Ascending aorta (tissue), 2 donors: ENCODE measurements at regions of chr21 and their contacts with region 1.

Region 1: GRCh38 chr21:44801468-44802395 is at the start of gene UBE2G2:
- DNase-seq: peak in 1 of 2 donors; percentile 86
- H3K4me3 ChIP-seq: peak within 1 kb of the TSS; percentile 85 to 91
- H3K27ac ChIP-seq: peak within 1 kb of the TSS; percentile 66
- H3K4me1 ChIP-seq: peaks cover 7 to 14% of the 10 kb centered on the region in 2 donors
- H3K27me3 ChIP-seq: no peaks in the 10 kb centered on the region
- CTCF ChIP-seq: no peak
- total RNA-seq, gene UBE2G2: 58.1 TPM

Region 2: GRCh38 chr21:44817506-44817880 is 15.8 kb after region 1 on chr21:
- intact Hi-C with region 1: loop called (anchors 1 kb)
- DNase-seq: peak; percentile 51 to 93
- H3K4me3 ChIP-seq: peak overlapping the region; percentile 60 to 85
- H3K27ac ChIP-seq: peak overlapping the region; percentile 73 to 82
- H3K4me1 ChIP-seq: peaks cover 5 to 12% of the 10 kb centered on the region in 2 donors
- H3K27me3 ChIP-seq: no peaks in the 10 kb centered on the region
- CTCF ChIP-seq: no peak

Region 3: GRCh38 chr21:44932408-44933181 is 130.9 kb after region 1 on chr21:
- intact Hi-C with region 1: loop called (anchors 5 kb)
- DNase-seq: no peak
- H3K4me3 ChIP-seq: peak overlapping the region; percentile 47 to 66
- H3K27ac ChIP-seq: no peak overlapping the region
- H3K4me1 ChIP-seq: peaks cover 19 to 22% of the 10 kb centered on the region in 2 donors
- H3K27me3 ChIP-seq: peaks cover 13% of the 10 kb centered on the region
- CTCF ChIP-seq: peak; percentile 37 to 72 (median 49)

Region 4: DNA sequence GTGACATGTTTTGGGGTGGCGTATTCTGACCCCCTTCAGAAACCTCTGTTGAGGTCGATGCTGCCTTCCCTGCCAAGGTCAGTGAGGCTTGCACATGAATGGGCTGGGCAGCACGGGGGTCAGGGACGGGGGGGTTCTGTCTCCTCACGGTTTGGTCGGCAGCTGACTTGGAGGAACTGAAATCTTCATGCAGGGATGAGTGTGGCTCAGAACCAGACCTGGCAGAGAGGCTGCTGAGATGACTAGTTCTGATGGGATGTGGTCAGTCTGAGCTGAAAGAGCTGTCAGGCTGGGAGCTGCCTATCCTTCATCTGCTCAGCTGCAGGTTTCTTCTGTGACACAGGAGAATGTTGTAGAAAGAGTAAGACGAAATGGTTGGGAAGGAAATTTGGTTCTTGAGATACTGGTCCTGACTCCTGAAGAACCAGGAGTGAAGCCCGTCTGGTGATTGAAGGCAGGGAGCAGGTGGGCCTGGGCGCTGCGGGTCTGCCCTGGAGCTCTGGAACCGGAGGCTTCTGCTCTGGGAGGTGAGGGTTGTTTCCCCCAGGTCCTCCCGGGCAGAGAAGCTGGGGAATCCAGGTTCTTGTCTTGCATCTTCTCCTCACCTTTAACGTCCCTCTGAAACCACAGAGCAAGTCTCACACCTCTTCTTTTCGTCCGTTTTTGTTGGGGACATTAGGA is 141.4 kb after region 1 on chr21:
- intact Hi-C with region 1: no loop called
- DNase-seq: no peak
- H3K4me3 ChIP-seq: no peak overlapping the region
- H3K27ac ChIP-seq: no peak overlapping the region
- H3K4me1 ChIP-seq: peaks cover 7 to 8% of the 10 kb centered on the region in 2 donors
- H3K27me3 ChIP-seq: no peaks in the 10 kb centered on the region
- CTCF ChIP-seq: no peak